ENCODE measurements at regions of chr17 and their contacts with region 1.

Region 1: DNA sequence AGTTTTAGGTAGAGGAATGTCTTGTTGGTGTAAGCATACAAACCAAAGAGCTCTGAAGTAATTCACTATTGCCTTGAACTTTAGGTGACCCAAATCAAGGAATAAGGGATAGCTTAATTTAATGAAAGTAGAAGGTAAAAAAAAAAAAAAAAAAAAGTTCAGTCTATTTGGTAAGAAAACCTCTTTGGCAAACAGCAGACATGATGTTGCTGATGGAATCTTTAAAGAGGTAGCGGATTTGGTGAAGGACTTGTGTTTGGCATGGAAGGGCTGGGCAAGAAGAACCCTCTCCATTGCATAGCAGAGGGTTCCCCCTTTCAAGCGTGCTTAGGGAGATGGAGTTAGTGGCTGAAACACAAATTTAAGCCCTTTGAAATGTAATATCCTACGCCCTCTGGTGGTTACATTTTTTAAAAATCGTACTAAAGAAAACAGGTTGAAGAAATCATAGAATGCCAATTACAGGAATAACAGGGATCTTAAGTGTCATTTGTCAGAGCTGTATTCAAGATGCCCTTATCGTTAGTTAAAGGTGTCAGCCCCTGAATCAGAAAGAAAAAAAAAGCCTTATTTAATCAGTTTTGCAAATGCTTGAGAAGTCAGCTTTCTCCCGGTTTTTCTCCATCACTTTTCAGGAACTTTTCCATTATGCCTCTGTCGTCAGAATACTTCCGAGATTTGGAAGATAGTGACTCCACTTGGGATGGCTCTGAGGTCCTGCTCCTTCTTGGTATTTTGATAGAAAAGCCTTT is 383.1 kb downstream of the KCNJ2 start:
- DNase-seq: no peak
- ATAC-seq: peak; percentile 69

Region 2: GRCh38 chr17:69575346-69575761 is 977.1 kb before region 1 on chr17:
- intact Hi-C with region 1: loop called (anchors 5 kb)
- DNase-seq: no peak
- ATAC-seq: peak; percentile 23

Region 3: GRCh38 chr17:70313057-70313852 is 239.2 kb before region 1 on chr17:
- intact Hi-C with region 1: loop called (anchors 5 kb)
- DNase-seq: no peak
- ATAC-seq: no peak

Region 4: DNA sequence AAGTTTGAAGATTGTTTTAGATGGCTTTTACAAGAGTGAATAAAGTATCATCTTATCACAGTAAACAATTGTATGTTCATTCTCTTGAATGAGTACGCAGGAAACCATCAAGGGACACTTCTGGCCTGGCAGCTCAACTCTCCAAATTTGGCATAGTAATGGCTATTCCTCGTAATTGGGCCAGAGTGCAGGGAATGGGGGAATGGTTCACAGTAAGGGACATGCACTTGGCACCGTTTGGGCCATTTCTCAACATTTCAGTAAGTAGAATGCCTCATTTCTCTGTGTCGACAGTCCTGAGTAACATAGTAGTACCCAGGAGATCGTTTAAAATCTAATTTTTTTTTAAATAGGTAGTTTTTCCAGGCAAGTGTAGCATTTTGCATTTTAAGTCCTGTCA is 73.5 kb before region 1 on chr17:
- intact Hi-C with region 1: loop called (anchors 10 kb)
- DNase-seq: no peak
- ATAC-seq: peak; percentile 85

Region 5: GRCh38 chr17:70604854-70605253 is 52.4 kb after region 1 on chr17:
- intact Hi-C with region 1: no loop called
- DNase-seq: no peak
- ATAC-seq: no peak

Region 6: DNA sequence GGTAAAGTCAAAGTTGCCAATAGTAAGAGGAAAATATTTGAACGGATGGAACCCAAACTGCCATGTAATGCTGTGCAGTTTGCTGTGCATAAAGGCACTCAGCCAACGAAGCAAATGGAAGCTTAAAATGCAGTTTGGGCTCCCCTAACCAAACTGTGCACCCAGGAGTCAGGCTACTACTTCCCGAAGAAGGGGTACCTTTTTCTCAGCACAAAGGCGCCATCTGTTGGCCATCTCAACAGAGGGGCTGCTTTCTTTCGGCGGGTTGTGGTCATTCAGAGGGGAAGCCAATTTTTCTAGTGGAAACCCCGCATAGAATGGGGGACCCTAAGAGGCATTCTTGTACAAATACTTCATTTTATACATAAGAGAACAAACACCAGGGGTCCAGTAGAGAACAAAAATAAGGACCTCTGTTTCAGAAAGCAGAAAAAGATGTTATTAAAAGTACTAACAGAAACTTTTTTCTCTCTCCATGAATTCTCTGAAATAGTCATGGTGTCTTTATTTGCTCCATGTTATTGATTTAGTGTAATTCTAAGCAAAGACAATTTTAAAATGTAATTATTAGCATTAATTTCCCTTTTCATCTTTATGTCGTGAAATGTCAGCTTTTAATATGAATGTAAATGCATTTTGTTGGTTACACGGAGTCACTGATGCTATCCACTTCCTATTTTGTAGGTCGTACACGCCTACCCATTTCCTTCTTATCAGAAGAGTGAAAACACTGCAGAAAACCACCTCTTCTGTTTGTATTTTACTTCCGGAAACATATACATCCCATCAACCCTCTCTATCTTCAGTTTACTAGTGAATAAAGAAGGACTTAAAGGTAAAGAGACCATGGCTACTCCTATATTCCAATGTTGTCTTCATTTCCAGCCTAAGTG is 70.2 kb after region 1 on chr17:
- intact Hi-C with region 1: loop called (anchors 5 kb)
- DNase-seq: no peak
- ATAC-seq: peak; percentile 72